Left cardiac atrium (tissue), 4 donors: ENCODE measurements at regions of chr13 and their contacts with region 1.

Region 1: GRCh38 chr13:102724923-102725322 is 30.1 kb upstream of the METTL21C start:
- DNase-seq: no peak
- ATAC-seq: peak; percentile 62 to 75

Region 2: DNA sequence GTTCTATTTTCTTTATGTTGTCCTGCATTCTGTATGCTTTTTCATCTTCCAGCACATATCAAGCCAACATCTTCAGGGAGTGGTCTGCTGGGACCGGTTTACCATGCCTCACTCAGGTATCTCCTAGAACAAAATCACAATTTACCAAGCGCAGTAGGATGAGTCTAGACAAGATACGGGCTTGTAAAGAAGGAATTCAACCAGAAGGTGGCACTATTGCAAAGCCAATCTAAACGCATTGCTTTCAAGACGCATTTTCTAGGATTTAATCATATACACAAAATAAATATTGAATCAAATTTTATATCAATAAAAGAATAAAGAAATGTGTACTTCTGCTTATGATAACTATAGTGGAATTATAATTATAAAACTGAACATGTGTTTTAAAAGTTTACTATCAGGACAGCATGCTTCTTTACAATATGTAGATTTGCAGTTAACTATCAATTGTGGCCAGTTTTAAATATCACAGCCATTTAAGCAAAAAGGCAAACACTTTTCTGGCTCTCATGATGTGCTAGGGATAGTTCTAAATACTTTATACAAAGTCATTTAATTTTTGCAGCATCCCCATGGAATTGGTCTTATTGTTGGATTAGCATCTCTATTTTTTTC is 144.3 kb before region 1 on chr13:
- intact Hi-C with region 1: loop called (anchors 2 to 5 kb)
- DNase-seq: no peak
- ATAC-seq: peak; percentile 74 to 78